Sigmoid colon (tissue), 7 donors: ENCODE measurements at regions of chr16 and their contacts with region 1.

Region 1: GRCh38 chr16:70703041-70703834 is 17.4 kb upstream of the MTSS2 start:
- DNase-seq: peak; percentile 94
- H3K4me3 ChIP-seq: no peak overlapping the region
- H3K27ac ChIP-seq: peak overlapping the region; percentile 92 to 99 (median 98)
- H3K4me1 ChIP-seq: peaks cover 6 to 98% (median 94%) of the 10 kb centered on the region in 4 donors
- H3K27me3 ChIP-seq: no peaks in the 10 kb centered on the region
- CTCF ChIP-seq: peak in 3 of 4 experiments; percentile 42 to 56 (median 43)
- EP300 ChIP-seq: peak in 3 of 4 donors; percentile 89 to 96 (median 91)
- POLR2A ChIP-seq: peak in 1 of 2 donors; percentile 32

Region 2: DNA sequence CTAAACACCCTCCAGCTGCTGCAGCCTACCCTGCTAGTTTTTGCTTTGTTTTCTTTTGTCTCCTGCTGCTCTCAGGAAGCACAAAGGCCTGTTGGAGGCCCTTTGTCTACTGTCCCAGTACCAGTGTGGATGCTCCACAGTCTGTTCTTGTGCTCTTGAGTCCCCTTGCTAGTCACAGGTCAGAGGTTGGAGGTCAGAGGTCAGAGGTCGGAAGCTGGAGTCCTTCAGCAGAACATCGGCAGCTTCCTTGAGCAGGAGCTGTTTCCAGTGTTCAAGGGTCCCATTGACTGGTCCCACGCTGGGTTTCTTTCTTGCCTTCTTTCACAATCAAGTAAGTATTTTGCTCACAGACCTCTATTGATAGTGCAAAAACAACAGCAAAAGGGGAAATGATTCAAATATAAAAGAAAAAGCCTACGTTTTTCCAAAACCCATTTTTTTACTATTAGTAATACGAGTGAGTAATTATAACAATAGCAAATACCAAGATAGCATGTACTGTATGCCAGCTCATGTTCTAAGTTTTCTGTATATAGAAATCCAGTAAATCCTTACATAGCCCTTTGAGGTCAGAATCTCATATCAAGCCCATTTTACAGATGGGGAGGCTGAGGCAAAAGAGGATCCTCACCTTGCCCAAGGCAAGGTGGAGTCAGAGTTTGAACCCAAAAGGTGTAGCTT is 67.8 kb before region 1 on chr16:
- intact Hi-C with region 1: no loop called
- DNase-seq: no peak
- H3K4me3 ChIP-seq: no peak overlapping the region
- H3K27ac ChIP-seq: peak overlapping the region in 1 of 4 donors; percentile 7
- H3K4me1 ChIP-seq: peaks cover 0 to 24% (median 6%) of the 10 kb centered on the region in 4 donors
- H3K27me3 ChIP-seq: no peaks in the 10 kb centered on the region
- CTCF ChIP-seq: no peak
- EP300 ChIP-seq: no peak
- POLR2A ChIP-seq: no peak

Region 3: GRCh38 chr16:70691223-70692129 is 11.8 kb before region 1 on chr16:
- intact Hi-C with region 1: loop called (anchors 2 kb)
- DNase-seq: peak; percentile 97
- H3K4me3 ChIP-seq: no peak overlapping the region
- H3K27ac ChIP-seq: peak overlapping the region; percentile 95 to 99 (median 98)
- H3K4me1 ChIP-seq: peaks cover 4 to 100% (median 100%) of the 10 kb centered on the region in 4 donors
- H3K27me3 ChIP-seq: no peaks in the 10 kb centered on the region
- CTCF ChIP-seq: no peak
- EP300 ChIP-seq: peak in 3 of 4 donors; percentile 83 to 90 (median 90)
- POLR2A ChIP-seq: peak; percentile 16 to 42

Region 4: DNA sequence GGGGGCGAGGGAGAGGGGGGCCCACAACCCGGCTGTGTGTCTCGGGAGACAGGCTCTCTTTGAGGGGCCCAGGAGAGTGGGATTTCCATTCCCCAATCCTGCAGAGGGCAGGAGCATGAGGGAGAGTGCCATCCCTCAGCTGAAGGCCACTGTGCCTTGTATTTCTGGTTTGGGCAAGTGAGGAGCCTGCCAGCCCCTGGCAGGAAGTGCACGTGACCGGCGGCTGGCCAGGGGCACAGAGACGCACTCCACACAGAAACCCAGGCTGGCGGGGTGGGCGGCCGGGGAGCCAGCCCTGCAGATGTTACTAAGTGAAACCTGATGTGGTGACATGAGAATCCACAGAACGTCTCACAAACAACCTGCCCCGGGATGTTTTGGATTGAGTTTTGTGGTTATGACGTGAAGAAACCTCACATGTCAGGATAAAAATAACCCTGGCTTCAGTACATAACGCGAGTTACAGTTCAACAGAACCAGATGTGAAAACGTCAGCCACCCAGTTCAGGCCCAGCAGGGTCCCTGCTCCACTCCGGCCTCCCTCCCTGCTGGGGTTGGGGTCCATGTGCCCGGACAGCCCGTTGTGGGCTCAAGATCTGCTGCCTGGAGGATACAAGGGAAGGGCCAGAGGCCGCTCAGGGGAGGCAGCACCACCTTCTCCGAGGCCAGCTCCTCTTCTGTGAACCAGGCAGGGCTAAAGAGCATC is 34.3 kb after region 1 on chr16:
- intact Hi-C with region 1: loop called (anchors 5 kb)
- DNase-seq: peak; percentile 91
- H3K4me3 ChIP-seq: no peak overlapping the region
- H3K27ac ChIP-seq: peak overlapping the region; percentile 84 to 98 (median 91)
- H3K4me1 ChIP-seq: peaks cover 0 to 66% (median 55%) of the 10 kb centered on the region in 4 donors
- H3K27me3 ChIP-seq: no peaks in the 10 kb centered on the region
- CTCF ChIP-seq: no peak
- EP300 ChIP-seq: peak; percentile 77 to 96 (median 91)
- POLR2A ChIP-seq: peak in 1 of 2 donors; percentile 20